ENCODE measurements at regions of chr2 and their contacts with region 1.

Region 1: DNA sequence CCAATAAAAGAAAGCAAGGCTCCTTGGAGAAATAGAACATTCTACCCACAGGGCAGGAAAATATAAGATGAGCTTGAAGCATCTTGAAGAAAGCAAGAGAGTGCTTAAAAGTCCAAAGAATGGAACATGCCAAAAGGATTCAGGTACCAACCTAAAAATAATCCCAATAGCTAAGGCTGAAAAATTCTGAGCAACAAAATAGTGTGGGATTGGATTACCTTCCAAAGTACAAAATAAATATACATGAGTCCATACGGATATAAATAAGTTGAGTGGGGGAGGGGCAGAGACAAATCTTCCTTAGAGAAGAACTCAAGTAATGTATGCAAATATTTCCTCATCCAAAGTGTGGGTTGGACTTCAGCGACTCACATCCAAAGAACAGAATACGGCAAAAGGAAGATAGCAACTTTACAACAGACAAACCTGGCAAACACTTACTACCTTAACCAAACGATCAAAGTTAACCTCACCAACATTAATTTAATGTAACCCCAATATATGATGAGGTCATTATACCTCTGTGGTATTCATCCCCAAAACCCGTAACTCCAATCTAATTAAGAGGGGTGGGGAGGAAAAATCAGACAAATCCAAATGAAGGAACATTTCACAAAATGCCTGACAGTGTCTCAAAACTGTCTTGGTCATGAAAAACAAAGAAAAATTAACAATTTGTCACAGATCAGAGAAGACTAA is 26.9 kb downstream of the MEMO1 start:
- DNase-seq: no peak
- ATAC-seq: no peak
- H3K4me3 ChIP-seq: no peak overlapping the region
- H3K4me3 Mint-ChIP-seq: no peak overlapping the region
- H3K27ac ChIP-seq: no peak overlapping the region
- H3K27ac Mint-ChIP-seq: no peak overlapping the region
- H3K4me1 ChIP-seq: peaks cover 11% of the 10 kb centered on the region
- H3K4me1 Mint-ChIP-seq: peaks cover 43% of the 10 kb centered on the region
- H3K27me3 ChIP-seq: no peaks in the 10 kb centered on the region
- H3K27me3 Mint-ChIP-seq: no peaks in the 10 kb centered on the region
- CTCF ChIP-seq: no peak

Region 2: DNA sequence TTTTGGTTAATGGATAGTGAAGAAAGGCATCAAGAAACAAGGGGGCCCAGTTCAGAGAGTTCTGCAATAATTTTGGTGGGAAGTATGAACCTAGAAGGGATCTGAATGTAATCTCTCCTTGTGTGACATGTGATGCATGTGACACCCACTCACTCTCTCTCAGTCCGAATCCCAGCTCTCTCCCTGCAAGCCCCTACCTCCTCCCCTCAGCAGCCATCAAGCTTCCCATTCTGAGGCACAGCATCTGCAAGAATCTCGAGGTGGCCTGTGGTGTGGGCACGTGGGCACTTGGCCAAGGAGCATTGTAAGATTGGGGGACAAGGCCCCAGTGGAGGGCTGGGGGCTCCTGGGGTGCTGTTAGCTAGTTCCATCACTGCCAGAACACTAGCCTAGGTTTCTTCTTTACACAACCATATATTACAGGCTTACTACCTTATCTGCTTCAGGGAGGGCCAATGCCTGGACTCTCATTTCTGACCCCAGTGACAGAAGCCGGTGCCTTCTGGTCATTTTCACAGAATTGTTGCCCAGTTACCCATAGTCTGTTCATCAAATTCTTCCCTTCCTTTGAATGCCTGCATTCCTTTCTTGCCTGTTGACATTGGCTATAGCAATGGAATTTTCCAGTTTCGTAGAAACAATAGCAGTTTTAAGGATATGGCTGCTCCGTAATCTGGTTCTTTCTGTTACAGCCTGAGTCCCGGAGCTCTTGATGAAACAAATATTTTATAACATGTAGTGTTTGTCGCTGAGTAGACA is 1550.2 kb before region 1 on chr2:
- CTCF ChIA-PET with region 1: no interaction called
- POLR2A ChIA-PET with region 1: no interaction called
- intact Hi-C with region 1: no loop called
- DNase-seq: no peak
- ATAC-seq: no peak
- H3K4me3 ChIP-seq: no peak overlapping the region
- H3K4me3 Mint-ChIP-seq: no peak overlapping the region
- H3K27ac ChIP-seq: no peak overlapping the region
- H3K27ac Mint-ChIP-seq: no peak overlapping the region
- H3K4me1 ChIP-seq: no peaks in the 10 kb centered on the region
- H3K4me1 Mint-ChIP-seq: peaks cover 7% of the 10 kb centered on the region
- H3K27me3 ChIP-seq: no peaks in the 10 kb centered on the region
- H3K27me3 Mint-ChIP-seq: no peaks in the 10 kb centered on the region
- CTCF ChIP-seq: no peak

Region 3: GRCh38 chr2:31962757-31963361 is 21.1 kb before region 1 on chr2:
- CTCF ChIA-PET with region 1: interaction called, 3 read pairs
- POLR2A ChIA-PET with region 1: no interaction called
- intact Hi-C with region 1: loop called in 1 of 2 experiments (anchors 2 kb)
- DNase-seq: peak in 1 of 14 experiments; percentile 7
- ATAC-seq: no peak
- H3K4me3 ChIP-seq: no peak overlapping the region
- H3K4me3 Mint-ChIP-seq: no peak overlapping the region
- H3K27ac ChIP-seq: no peak overlapping the region
- H3K27ac Mint-ChIP-seq: peak overlapping the region; percentile 1
- H3K4me1 ChIP-seq: peaks cover 24% of the 10 kb centered on the region
- H3K4me1 Mint-ChIP-seq: peaks cover 62% of the 10 kb centered on the region
- H3K27me3 ChIP-seq: no peaks in the 10 kb centered on the region
- H3K27me3 Mint-ChIP-seq: no peaks in the 10 kb centered on the region
- CTCF ChIP-seq: no peak

Region 4: DNA sequence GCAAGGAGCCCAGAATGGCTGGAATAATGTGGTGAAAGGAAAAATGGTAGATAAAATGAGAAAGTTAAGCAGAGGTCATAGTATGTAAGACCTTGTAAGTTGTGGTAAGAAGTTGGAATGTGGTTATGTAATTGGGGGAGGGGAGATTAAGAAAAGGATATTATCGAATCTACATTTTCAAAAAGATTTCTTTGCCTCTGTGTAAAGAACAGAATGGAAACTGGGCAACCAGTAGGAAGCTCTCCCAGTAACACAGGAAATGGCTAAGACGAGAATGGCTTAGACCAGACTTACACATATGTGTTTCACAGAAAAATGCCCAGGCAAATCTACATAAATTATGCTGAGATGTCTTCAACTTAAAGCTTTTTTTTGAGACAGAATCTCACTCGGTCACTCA is 13.7 kb after region 1 on chr2:
- CTCF ChIA-PET with region 1: no interaction called
- POLR2A ChIA-PET with region 1: no interaction called
- intact Hi-C with region 1: no loop called
- DNase-seq: peak in 2 of 14 experiments; percentile 4 to 8
- ATAC-seq: no peak
- H3K4me3 ChIP-seq: no peak overlapping the region
- H3K4me3 Mint-ChIP-seq: peak overlapping the region; percentile 5
- H3K27ac ChIP-seq: no peak overlapping the region
- H3K27ac Mint-ChIP-seq: peak overlapping the region; percentile 64
- H3K4me1 ChIP-seq: peaks cover 26% of the 10 kb centered on the region
- H3K4me1 Mint-ChIP-seq: peaks cover 62% of the 10 kb centered on the region
- H3K27me3 ChIP-seq: no peaks in the 10 kb centered on the region
- H3K27me3 Mint-ChIP-seq: no peaks in the 10 kb centered on the region
- CTCF ChIP-seq: no peak